ENCODE measurements at regions of chr11 and their contacts with region 1.

Region 1: GRCh38 chr11:110376711-110377324 is 52.9 kb upstream of the FDX1 start:
- DNase-seq: peak; percentile 82 to 93
- H3K4me3 ChIP-seq: peak overlapping the region; percentile 5 to 35 (median 24)
- H3K27ac ChIP-seq: peak overlapping the region; percentile 55 to 79 (median 66)
- H3K4me1 ChIP-seq: peaks cover 0 to 27% (median 16%) of the 10 kb centered on the region in 4 donors
- H3K27me3 ChIP-seq: no peaks in the 10 kb centered on the region
- CTCF ChIP-seq: peak in 5 of 7 experiments; percentile 51 to 77 (median 69)
- EP300 ChIP-seq: no peak
- POLR2A ChIP-seq: no peak

Region 2: DNA sequence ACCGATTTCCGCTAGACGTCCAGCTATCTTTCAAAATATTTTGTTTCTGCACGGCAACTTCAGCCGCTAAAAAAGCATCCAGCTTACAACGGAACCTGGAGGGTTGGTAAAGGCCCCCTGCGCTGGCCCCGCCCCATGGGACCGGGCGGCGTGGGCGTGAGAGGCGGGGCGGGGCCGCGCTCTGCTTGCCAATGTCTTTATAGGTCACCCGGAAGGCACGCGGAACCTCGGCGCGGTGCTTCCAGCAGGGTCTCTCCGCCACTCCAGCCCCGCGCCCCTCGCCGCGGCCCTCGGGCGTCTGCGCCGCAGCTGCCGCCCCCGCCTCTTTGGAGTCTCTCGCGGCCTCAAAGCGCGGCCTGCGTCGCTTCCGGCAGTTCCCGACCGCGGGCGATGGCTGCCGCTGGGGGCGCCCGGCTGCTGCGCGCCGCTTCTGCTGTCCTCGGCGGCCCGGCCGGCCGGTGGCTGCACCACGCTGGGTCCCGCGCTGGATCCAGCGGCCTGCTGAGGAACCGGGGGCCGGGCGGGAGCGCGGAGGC is 53.0 kb after region 1 on chr11 and contains the start of gene FDX1:
- intact Hi-C with region 1: loop called (anchors 10 kb)
- DNase-seq: peak; percentile 83 to 95
- H3K4me3 ChIP-seq: peak within 1 kb of the TSS; percentile 75 to 90 (median 79)
- H3K27ac ChIP-seq: peak within 1 kb of the TSS; percentile 94 to 100 (median 97)
- H3K4me1 ChIP-seq: peaks cover 20 to 47% (median 36%) of the 10 kb centered on the region in 4 donors
- H3K27me3 ChIP-seq: no peaks in the 10 kb centered on the region
- CTCF ChIP-seq: peak in 3 of 7 experiments; percentile 51 to 78 (median 58)
- EP300 ChIP-seq: no peak
- POLR2A ChIP-seq: no peak
- total RNA-seq, gene FDX1: 0.58 to 78.8 (median 23.5) TPM